Activated naive CD4-positive, alpha-beta T cell treated with anti-CD3 and anti-CD28 coated beads, Interleukin-2, amount 10 ng/mL, durations not matched to agents 7 days and 5 days (primary cell): ENCODE measurements at regions of chr7 and their contacts with region 1.

Region 1: GRCh38 chr7:130961128-130961601 is 227.2 kb upstream of the KLF14 start:
- DNase-seq: peak; percentile 87
- H3K4me3 Mint-ChIP-seq: peak overlapping the region; percentile 90
- H3K27ac Mint-ChIP-seq: peak overlapping the region; percentile 99
- H3K4me1 Mint-ChIP-seq: peaks cover 49% of the 10 kb centered on the region
- H3K27me3 Mint-ChIP-seq: no peaks in the 10 kb centered on the region

Region 2: DNA sequence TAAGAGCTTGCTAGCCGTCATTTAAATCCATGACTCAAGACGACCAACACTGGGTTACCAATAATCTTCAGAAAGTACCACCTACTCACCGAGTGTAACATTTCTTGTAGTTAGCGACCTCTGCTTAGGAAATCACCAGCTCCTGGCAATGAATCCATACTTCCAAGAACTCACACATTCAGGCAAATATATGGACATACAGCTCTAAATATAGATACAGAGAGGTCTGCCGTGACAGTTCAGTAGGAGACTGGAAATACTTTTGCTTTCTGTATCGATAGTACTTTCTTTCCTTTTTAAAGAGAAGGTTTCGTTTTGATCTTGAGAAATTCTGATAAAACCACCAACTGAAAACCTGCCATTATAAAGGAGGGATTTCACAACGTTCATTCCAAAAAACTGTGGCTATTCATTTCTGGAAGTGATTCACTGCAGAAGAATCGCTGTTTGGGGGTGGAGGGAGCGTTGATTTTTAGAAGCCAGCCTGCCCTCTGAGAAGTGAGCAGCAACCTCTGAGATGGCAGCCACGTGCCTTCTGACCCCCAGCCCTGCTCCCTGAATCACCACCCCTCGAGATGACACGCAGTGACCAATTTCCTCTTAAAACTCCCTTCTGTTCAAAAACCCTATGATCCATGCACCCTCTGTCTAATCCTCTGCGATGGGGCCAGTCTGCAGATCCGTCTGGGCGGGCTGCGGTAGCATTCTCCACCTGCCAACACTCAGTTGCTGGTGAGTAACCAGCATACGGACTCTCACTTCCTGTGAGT is 48.1 kb before region 1 on chr7:
- CTCF ChIA-PET with region 1: interaction called, 21 read pairs
- DNase-seq: peak; percentile 89
- H3K4me3 Mint-ChIP-seq: peak overlapping the region; percentile 83
- H3K27ac Mint-ChIP-seq: peak overlapping the region; percentile 95
- H3K4me1 Mint-ChIP-seq: peaks cover 86% of the 10 kb centered on the region
- H3K27me3 Mint-ChIP-seq: no peaks in the 10 kb centered on the region

Region 3: DNA sequence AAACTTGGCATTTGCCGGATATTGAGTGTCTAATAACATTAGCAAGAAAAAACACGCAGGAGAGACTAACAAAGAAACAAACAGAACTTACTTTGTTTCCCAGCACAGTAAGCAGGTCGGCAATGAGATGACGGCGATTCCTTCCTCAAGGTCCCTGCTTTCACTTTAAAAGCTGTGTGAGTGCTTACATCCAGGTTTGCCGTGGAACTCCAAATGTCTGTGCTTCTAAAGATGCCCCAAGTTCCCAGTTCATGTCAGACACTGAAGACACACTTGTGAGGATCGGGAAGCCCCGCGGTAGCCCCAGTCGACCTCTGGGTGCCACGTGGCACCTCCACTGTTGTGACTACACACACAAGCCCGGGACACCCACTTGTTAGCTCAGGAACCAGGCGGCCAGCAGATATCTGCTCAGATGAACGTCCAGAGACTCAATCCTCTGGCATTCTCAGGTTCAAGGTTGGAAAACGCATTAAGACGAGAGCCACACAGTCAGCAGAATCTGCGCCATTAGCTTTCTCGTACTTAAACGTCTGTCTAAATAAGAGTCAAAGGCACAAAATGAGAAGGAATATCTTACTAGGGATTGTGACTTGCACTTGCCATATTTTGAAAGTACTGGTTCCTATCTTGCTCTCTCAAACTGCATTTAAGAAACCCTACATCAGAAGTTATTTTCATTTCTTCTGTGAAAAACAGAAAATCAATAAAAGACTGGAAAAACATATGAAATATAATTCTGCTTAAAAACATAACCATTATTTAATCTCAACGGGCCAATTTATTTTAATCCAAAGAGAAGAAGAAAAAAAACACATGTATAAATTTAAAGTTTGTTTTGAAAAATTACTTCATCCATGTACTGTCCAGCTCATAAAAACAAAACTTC is 19.6 kb before region 1 on chr7:
- CTCF ChIA-PET with region 1: interaction called, 31 read pairs
- DNase-seq: no peak
- H3K4me3 Mint-ChIP-seq: peak overlapping the region; percentile 73
- H3K27ac Mint-ChIP-seq: peak overlapping the region; percentile 89
- H3K4me1 Mint-ChIP-seq: peaks cover 91% of the 10 kb centered on the region
- H3K27me3 Mint-ChIP-seq: no peaks in the 10 kb centered on the region